HEK293 (cell line): ENCODE measurements at regions of chr20 and their contacts with region 1.

Region 1: DNA sequence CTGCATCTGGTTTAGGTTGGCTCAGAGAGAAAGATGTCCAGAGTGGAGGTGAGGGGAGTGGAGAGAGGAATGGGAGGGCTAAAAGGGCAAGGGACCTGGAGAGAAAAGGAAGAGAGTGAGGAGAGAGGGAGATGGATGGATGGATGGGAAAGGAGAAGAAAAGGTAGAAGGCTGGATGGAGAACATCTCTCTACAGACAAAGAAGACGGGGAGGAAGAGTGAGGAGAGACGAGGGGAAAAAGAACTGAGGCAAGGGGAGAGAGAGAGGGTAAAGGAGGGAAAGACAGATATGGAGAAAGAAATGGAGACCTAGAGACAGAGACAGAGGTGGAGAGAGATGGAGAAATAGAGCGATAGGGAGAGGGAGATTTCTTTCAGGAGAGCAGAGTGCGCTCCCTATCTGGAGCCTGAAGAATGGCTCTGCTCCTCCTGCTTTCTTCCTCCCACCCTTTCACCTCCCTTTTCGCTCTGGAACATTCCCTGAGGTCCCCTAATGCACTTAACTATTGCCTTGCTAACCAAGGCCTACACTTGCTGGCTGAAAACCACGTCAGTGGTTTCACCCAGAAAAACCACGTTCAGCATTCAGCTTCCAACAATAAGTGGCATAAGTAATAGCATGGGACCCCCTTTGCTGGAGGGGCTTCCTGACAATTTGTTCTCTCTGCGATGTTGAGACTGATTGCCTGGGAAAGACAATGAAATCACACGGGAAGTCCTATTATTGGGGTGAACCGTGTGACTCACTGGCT is 286.3 kb downstream of the CDH26 start:
- H3K4me3 ChIP-seq: no peak overlapping the region
- H3K27ac ChIP-seq: no peak overlapping the region
- H3K4me1 ChIP-seq: no peaks in the 10 kb centered on the region
- CTCF ChIP-seq: no peak

Region 2: DNA sequence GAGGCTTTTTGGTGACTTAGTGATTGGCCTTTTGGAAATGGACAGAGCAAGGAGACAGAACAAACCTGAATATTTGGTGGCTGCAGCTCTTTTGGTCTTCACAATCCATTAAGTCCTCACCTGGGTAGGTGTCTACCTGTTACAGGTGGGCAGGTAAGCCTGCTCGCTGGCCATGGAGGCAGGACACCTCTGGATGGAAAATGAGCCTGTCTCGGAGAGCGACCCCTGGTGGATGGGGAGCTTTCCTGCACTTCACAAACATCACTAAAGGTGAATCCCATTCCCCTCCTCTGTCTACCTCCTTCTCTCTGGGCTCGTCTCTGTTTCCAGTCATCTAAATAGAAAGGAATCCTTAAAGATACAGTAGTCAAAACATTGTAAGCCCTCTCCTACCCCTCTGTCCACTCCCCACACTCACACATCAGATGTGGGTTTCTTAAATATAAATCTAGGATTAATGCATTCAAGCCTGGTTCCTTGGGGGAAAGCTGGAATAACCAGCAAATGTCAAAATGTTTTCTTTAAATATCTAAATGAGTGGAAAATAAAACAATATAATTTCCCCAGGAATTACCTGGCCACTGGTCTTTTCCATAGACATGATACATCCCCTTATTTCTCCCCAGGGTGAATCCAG is 18.5 kb after region 1 on chr20:
- CTCF ChIA-PET with region 1: interaction called, 10 read pairs
- POLR2A ChIA-PET with region 1: no interaction called
- H3K4me3 ChIP-seq: no peak overlapping the region
- H3K27ac ChIP-seq: no peak overlapping the region
- H3K4me1 ChIP-seq: no peaks in the 10 kb centered on the region
- CTCF ChIP-seq: peak; percentile 37